WTC11 (cell line): ENCODE measurements at regions of chr16 and their contacts with region 1.

Region 1: GRCh38 chr16:621528-622105 is 9.2 kb upstream of the WFIKKN1 start:
- DNase-seq: no peak
- ATAC-seq: no peak
- H3K4me3 Mint-ChIP-seq: no peak overlapping the region
- H3K27ac Mint-ChIP-seq: peak overlapping the region; percentile 70
- H3K4me1 Mint-ChIP-seq: peaks cover 24% of the 10 kb centered on the region
- H3K27me3 Mint-ChIP-seq: no peaks in the 10 kb centered on the region
- CTCF ChIP-seq: no peak

Region 2: GRCh38 chr16:610513-611334 is 10.9 kb before region 1 on chr16:
- CTCF ChIA-PET with region 1: interaction called, 13 read pairs
- POLR2A ChIA-PET with region 1: no interaction called
- DNase-seq: peak; percentile 83
- ATAC-seq: peak; percentile 92
- H3K4me3 Mint-ChIP-seq: no peak overlapping the region
- H3K27ac Mint-ChIP-seq: peak overlapping the region; percentile 97
- H3K4me1 Mint-ChIP-seq: peaks cover 8% of the 10 kb centered on the region
- H3K27me3 Mint-ChIP-seq: no peaks in the 10 kb centered on the region
- CTCF ChIP-seq: peak; percentile 87

Region 3: DNA sequence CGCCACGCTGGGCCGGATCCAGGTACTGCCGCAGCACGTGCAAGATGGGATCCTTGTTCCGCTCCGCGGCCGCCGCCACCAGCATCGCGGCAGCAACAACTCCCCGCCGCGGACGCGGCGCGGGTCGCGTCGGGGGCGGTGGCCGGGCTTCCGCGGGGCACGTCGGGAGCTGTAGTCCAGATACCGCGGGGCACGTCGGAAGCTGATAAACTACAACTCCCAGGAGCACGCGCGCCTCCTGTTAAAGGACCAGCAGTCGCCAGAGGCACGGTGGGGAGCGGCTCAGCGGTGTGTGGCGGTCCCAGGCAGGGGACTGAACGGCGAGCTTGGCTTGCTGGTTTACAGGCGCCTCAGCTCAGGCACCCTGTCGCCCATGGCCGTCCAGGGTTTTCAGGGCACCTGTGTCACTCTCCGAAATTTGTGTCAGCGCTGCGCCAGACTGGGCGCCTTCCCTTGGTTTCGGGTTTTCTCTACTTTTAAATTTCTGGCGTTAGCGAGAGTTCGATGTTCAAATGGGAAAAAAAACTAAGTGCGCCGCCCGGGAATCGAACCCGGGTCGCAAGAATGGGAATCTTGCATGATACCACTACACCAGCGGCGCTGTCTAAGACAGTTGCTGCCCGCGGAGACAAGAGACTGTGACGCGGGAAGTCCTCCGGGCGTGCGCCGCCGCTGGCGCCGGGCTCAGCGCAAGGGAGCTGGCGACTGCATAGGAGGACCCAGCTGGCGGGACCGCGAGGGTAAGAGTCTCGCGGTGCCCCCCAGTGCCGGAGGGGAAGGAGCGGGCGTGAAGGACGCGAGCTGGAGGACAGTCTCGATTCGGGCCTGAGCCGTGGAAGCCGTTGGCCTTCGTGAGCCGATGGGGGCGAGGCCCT is 14.8 kb after region 1 on chr16 and contains the start of gene METTL26:
- CTCF ChIA-PET with region 1: interaction called, 11 read pairs
- POLR2A ChIA-PET with region 1: interaction called, 3 read pairs
- DNase-seq: peak; percentile 94
- ATAC-seq: peak; percentile 73
- H3K4me3 Mint-ChIP-seq: peak within 1 kb of the TSS; percentile 97
- H3K27ac Mint-ChIP-seq: peak within 1 kb of the TSS; percentile 99
- H3K4me1 Mint-ChIP-seq: peaks cover 19% of the 10 kb centered on the region
- H3K27me3 Mint-ChIP-seq: peaks cover 4% of the 10 kb centered on the region; the same call in 1 of the 2 replicates
- CTCF ChIP-seq: no peak
- total RNA-seq, gene METTL26: 115 to 121 TPM (median 115 TPM) in 3 replicates